Dorsolateral prefrontal cortex (tissue), 120 donors: ENCODE measurements at regions of chr1 and their contacts with region 1.

Region 1: GRCh38 chr1:173429471-173430402 is 47.4 kb upstream of the PRDX6 start:
- DNase-seq: peak; percentile 14 to 91 (median 81)
- H3K4me3 ChIP-seq: peak overlapping the region in 57 of 59 donors; percentile 2 to 56 (median 40)
- H3K27ac ChIP-seq: peak overlapping the region in 58 of 59 donors; percentile 23 to 89 (median 80)
- H3K27me3 ChIP-seq: no peaks in the 10 kb centered on the region
- CTCF ChIP-seq: peak; percentile 52 to 84 (median 72)

Region 2: GRCh38 chr1:173392895-173393658 is 36.7 kb before region 1 on chr1:
- intact Hi-C with region 1: no loop called
- DNase-seq: no peak
- H3K4me3 ChIP-seq: no peak overlapping the region
- H3K27ac ChIP-seq: no peak overlapping the region
- H3K27me3 ChIP-seq: no peaks in the 10 kb centered on the region
- CTCF ChIP-seq: no peak

Region 3: GRCh38 chr1:173824331-173825081 is 394.8 kb after region 1 on chr1 and contains the starts of genes CENPL and DARS2:
- intact Hi-C with region 1: loop called (anchors 2 kb)
- DNase-seq: peak; percentile 85 to 97 (median 95)
- H3K4me3 ChIP-seq: peak within 1 kb of the TSS; percentile 61 to 98 (median 86)
- H3K27ac ChIP-seq: peak within 1 kb of the TSS; percentile 1 to 96 (median 89)
- H3K27me3 ChIP-seq: no peaks in the 10 kb centered on the region
- CTCF ChIP-seq: peak in 38 of 56 donors; percentile 5 to 53 (median 34)
- total RNA-seq, gene CENPL: 2.4 to 10.9 (median 5.3) TPM
- total RNA-seq, gene DARS2: 7.0 to 13.9 (median 9.8) TPM

Region 4: GRCh38 chr1:174217787-174218574 is 788.2 kb after region 1 on chr1:
- intact Hi-C with region 1: loop called in 1 of 2 experiments (anchors 5 kb)
- DNase-seq: no peak
- H3K4me3 ChIP-seq: no peak overlapping the region
- H3K27ac ChIP-seq: no peak overlapping the region
- H3K27me3 ChIP-seq: no peaks in the 10 kb centered on the region
- CTCF ChIP-seq: peak in 55 of 56 donors; percentile 49 to 79 (median 70)